ENCODE measurements at regions of chr18 and their contacts with region 1.

Region 1: DNA sequence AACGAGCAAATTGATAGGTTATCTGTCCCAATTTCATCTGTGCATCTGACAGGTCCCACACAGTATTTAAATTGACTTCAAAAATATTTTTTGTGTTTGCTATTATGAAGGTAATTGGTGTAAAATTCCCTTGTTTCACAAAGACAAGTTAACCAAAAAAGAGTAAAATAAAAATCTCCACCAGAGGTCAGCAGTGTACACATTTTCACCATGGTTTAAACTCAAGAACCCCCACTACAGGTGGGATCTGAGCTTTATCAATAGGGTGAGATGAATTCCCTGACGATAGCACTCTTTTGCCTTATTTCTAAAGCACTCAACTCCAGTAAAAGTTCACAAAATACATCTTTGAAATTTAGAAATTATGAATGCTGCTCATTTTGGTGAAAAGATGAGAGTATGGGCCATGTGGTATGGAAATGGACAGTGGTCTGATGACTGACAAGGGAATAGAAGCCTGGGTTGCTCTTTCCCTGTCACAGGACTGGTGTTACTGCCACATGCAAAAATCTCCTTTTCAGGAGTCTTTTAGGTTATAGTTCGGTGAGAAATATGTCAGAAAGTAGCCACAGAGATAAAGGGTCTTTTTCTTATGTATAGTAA is 68.0 kb downstream of the SERPINB8 start:
- DNase-seq: peak; percentile 50
- CTCF ChIP-seq: peak; percentile 22

Region 2: DNA sequence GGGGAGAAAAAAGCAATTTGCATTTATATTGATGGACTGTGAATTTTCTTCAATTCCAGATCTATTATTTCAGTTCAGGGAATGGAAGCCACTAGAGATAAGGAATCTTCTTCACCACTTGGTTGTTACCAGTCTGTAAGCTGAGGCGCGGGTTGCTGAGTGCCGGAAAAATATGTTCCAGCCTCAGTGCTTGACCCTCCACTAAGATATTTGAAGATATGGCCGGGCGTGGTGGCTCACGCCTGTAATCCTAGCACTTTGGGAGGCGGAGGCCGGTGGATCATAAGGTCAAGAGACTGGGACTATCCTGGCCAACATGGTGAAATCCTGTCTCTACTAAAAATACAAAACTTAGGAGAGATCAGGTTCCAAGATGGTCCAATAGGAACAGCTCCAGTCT is 97.9 kb before region 1 on chr18:
- in situ Hi-C with region 1: no loop called
- DNase-seq: no peak
- CTCF ChIP-seq: no peak

Region 3: DNA sequence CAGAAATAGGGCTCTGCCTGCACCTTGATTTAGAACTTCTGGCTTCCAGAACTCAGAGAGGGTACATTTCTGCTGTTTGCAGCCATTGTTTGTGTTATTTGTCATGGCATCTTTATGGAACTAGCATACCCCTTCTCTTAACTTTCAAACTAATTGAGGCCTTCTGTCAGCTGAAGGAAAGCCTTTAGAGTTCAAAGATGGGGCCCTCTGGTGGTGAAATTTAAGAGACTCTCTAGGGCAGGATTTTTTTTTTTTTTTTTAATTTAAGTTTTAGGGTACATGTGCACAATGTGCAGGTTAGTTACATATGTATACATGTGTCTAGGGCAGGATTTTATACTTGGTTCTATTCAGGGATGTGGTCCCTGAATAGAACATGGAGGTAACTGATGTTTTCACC is 371.6 kb after region 1 on chr18:
- in situ Hi-C with region 1: loop called (anchors 25 kb)
- DNase-seq: peak; percentile 28
- CTCF ChIP-seq: no peak

Measured in GM13976 (cell line).